HEK293 (cell line): ENCODE measurements at regions of chr17 and their contacts with region 1.

Region 1: DNA sequence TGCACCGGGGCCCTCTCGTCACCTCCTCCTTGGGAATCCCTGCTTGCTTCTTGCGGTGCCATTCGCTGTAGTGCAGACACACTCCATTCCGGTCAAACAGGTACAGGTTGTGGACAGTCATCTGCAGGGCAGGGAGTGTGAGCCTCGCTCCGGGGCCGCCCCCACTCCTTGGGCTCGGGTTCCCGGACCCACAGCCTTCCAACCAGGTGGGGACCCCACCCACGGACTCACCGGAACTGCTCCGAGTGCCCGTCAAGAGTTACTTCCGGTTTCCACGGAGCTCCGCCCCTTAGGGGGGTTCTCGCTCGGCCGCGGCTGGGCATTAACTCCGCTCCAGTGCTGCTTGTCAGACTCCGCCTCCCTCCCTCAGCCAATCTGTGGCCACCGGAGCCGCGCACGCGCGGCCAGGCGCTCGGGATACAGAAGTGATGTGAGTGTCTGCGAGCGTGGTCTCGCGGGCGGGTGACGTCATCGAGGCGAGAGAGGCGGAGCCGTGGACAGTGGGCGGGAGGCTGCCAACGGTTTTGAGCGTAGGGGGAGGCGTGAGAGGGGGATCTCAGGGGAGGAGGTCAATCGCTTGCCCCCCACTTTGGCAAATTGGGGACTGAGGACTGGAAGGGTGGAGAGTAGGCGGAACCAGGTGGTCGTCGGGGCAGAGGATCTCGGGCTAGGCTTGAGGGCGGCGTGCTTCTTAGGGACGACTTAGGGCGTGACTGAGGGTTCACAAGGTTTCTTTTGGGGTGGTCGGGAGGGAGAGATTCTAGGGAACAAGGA is at the starts of genes CNTROB and TRAPPC1:
- H3K4me3 ChIP-seq: peak within 1 kb of the TSS; percentile 93
- H3K27ac ChIP-seq: peak within 1 kb of the TSS; percentile 57; the same call in 1 of the 2 replicates
- H3K4me1 ChIP-seq: peaks cover 5% of the 10 kb centered on the region; the same call in 1 of the 2 replicates
- CTCF ChIP-seq: no peak

Region 2: DNA sequence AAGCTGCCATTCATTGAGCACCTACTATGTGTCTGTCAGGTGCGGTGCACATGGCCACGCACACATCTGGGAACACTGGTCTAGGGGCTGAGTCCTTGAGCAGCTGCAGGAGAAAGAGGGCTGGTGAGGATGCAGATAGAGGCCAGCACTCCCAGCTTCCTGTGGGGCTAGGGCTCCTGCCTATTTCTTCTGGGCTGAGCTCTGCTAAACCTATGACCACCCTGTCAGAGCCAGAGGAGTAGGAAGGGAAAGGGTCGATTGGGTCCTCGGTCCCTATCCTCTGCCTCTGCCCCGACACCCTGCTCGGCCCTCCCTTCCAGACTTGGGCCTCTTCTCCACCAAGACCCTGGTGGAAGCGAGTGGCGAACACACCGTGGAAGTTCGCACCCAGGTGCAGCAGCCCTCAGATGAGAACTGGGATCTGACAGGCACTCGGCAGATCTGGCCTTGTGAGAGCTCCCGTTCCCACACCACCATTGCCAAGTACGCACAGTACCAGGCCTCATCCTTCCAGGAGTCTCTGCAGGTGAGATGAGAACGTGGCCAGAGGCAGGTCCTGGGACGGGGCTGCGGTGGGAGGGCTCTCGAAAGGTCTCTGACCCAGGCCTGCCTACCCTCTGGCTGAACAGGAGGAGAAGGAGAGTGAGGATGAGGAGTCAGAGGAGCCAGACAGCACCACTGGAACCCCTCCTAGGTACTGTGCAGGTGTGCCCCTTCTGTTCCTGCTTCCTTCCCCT is 81.0 kb before region 1 on chr17:
- CTCF ChIA-PET with region 1: no interaction called
- POLR2A ChIA-PET with region 1: no interaction called
- H3K4me3 ChIP-seq: no peak overlapping the region
- H3K27ac ChIP-seq: no peak overlapping the region
- H3K4me1 ChIP-seq: no peaks in the 10 kb centered on the region; the same call in 1 of the 2 replicates
- CTCF ChIP-seq: no peak

Region 3: DNA sequence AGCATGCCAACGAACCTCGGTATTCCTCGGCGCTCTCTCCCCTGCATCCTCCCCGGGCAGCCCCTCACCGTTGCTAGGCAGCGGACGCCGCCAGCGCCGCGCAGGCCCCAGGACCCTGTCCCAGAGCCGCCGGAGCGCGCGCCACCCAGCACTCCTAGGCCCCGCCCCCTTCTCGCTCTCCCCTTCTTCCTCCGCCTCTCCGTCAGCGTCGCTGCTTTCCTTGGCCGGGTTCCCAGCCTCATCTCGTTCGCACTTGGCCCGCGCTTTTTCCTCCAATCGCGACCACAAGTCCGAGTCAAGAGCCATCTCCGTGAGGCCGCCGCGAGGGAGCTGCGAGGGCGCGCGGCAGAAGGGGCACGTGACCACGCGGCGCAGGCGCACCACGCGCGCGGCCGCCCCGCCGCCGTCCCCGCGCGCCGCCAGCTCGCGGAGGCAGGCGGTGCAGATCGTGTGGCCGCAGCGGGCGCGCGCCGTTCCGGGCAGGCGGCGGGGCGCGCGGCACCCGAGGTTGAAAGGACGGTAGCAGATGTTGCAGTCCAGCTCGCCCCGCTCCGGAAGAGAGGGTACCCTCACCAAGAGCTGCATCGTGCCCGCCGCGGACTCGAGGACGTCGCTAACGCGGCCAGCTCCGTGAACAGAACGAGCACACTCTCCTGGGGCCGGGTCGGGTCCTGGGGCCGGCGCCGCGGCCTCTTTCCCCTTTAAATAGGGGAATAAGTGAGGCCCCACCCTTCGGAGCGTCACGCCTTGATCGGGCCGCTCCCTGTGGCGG is 16.1 kb before region 1 on chr17 and contains the start of gene RNF227:
- CTCF ChIA-PET with region 1: interaction called, 12 read pairs
- POLR2A ChIA-PET with region 1: interaction called, 66 read pairs
- H3K4me3 ChIP-seq: peak within 1 kb of the TSS; percentile 58
- H3K27ac ChIP-seq: peak within 1 kb of the TSS; percentile 90
- H3K4me1 ChIP-seq: peaks cover 14% of the 10 kb centered on the region
- CTCF ChIP-seq: no peak; the same call in 1 of the 2 replicates

Region 4: GRCh38 chr17:7944326-7944725 is 12.4 kb after region 1 on chr17:
- CTCF ChIA-PET with region 1: interaction called, 4 read pairs
- POLR2A ChIA-PET with region 1: interaction called, 22 read pairs
- H3K4me3 ChIP-seq: no peak overlapping the region
- H3K27ac ChIP-seq: no peak overlapping the region
- H3K4me1 ChIP-seq: no peaks in the 10 kb centered on the region
- CTCF ChIP-seq: no peak

Region 5: GRCh38 chr17:7982666-7983065 is 50.8 kb after region 1 on chr17:
- CTCF ChIA-PET with region 1: interaction called, 13 read pairs
- POLR2A ChIA-PET with region 1: interaction called, 6 read pairs
- H3K4me3 ChIP-seq: no peak overlapping the region
- H3K27ac ChIP-seq: no peak overlapping the region
- H3K4me1 ChIP-seq: no peaks in the 10 kb centered on the region
- CTCF ChIP-seq: no peak

Region 6: GRCh38 chr17:8073627-8074484 is 142.0 kb after region 1 on chr17:
- CTCF ChIA-PET with region 1: interaction called, 10 read pairs
- POLR2A ChIA-PET with region 1: interaction called, 4 read pairs
- H3K4me3 ChIP-seq: peak overlapping the region; percentile 28
- H3K27ac ChIP-seq: no peak overlapping the region
- H3K4me1 ChIP-seq: no peaks in the 10 kb centered on the region
- CTCF ChIP-seq: peak; percentile 92